ENCODE measurements at regions of chrX and their contacts with region 1.

Region 1: GRCh38 chrX:14029425-14030173 is at the start of gene GEMIN8:
- DNase-seq: peak; percentile 94
- H3K4me3 ChIP-seq: peak within 1 kb of the TSS; percentile 61 to 68 (median 62)
- H3K27ac ChIP-seq: peak within 1 kb of the TSS; percentile 85 to 93 (median 88)
- H3K4me1 ChIP-seq: peaks cover 0 to 20% (median 9%) of the 10 kb centered on the region in 4 donors
- H3K27me3 ChIP-seq: no peaks in the 10 kb centered on the region
- CTCF ChIP-seq: no peak
- EP300 ChIP-seq: peak in 1 of 4 donors; percentile 24
- POLR2A ChIP-seq: peak; percentile 50 to 59
- total RNA-seq, gene GEMIN8: 19.3 to 28.5 (median 23.3) TPM

Region 2: DNA sequence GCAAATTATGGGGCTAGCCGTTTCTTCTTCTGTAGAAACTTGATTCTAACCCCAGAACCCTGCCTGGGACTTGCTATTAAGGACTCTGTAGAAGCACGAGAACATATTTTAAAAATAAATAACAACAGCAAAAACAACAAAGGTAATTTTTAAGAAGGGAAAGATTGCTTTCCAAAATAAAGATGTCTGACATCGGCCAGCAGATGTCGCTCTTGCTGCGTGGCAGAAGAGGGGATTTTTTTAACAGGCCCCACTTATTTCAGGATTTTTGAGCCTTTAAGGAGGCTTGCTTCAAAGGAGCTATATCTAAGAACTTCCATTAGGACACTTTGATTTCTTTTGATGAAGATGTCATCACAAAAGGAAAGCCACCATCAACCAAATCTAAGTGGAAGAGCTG is 523.0 kb before region 1 on chrX:
- intact Hi-C with region 1: loop called (anchors 2 kb)
- DNase-seq: no peak
- H3K4me3 ChIP-seq: no peak overlapping the region
- H3K27ac ChIP-seq: no peak overlapping the region
- H3K4me1 ChIP-seq: peaks cover 0 to 3% (median 0%) of the 10 kb centered on the region in 4 donors
- H3K27me3 ChIP-seq: peaks cover 0 to 4% (median 0%) of the 10 kb centered on the region in 3 donors
- CTCF ChIP-seq: peak; percentile 36 to 57 (median 49)
- EP300 ChIP-seq: no peak
- POLR2A ChIP-seq: no peak

Region 3: DNA sequence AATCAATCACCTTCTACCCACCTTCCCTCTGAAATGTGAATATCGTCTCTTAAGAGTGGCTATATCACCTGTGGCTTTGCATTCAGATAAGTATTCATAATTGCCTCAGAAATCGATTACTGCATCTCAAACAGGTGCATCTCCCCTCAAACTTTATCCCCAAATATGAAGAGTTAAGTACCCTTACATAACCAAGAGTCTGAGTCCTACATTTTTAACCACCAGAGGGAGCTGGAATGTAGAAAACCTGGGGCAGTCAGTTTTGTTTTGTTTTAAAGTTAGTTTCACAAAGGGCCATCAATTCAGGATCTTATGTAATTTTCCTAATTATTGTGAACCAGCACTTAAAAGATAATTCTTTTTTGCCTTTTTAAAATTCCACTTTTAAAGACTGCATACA is 371.0 kb before region 1 on chrX:
- intact Hi-C with region 1: loop called (anchors 2 kb)
- DNase-seq: no peak
- H3K4me3 ChIP-seq: no peak overlapping the region
- H3K27ac ChIP-seq: peak overlapping the region; percentile 19 to 69 (median 61)
- H3K4me1 ChIP-seq: peaks cover 0 to 40% (median 6%) of the 10 kb centered on the region in 4 donors
- H3K27me3 ChIP-seq: no peaks in the 10 kb centered on the region
- CTCF ChIP-seq: peak; percentile 44 to 62 (median 56)
- EP300 ChIP-seq: no peak
- POLR2A ChIP-seq: no peak

Region 4: DNA sequence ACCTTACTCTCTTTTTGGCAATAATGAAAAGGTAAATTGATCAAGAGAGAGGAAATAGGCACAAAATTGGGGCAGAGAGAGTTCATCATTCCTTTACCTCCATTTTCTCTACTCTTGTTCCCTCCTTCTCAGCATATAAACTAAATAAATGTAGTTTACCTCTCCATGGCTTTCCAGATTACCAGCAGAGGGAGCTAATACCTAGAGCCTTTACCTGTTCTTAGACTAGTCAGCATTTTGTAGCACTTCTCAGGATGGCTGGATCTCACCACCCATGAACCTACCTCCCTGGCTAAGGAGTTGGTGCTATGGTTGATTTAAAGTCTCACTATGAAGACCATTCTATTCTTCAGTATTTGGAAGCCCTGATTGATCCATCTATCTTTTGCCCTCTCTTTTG is 279.4 kb before region 1 on chrX:
- intact Hi-C with region 1: loop called (anchors 5 kb)
- DNase-seq: no peak
- H3K4me3 ChIP-seq: no peak overlapping the region
- H3K27ac ChIP-seq: no peak overlapping the region
- H3K4me1 ChIP-seq: no peaks in the 10 kb centered on the region
- H3K27me3 ChIP-seq: no peaks in the 10 kb centered on the region
- CTCF ChIP-seq: peak in 3 of 4 experiments; percentile 14 to 42 (median 22)
- EP300 ChIP-seq: no peak
- POLR2A ChIP-seq: no peak

Region 5: DNA sequence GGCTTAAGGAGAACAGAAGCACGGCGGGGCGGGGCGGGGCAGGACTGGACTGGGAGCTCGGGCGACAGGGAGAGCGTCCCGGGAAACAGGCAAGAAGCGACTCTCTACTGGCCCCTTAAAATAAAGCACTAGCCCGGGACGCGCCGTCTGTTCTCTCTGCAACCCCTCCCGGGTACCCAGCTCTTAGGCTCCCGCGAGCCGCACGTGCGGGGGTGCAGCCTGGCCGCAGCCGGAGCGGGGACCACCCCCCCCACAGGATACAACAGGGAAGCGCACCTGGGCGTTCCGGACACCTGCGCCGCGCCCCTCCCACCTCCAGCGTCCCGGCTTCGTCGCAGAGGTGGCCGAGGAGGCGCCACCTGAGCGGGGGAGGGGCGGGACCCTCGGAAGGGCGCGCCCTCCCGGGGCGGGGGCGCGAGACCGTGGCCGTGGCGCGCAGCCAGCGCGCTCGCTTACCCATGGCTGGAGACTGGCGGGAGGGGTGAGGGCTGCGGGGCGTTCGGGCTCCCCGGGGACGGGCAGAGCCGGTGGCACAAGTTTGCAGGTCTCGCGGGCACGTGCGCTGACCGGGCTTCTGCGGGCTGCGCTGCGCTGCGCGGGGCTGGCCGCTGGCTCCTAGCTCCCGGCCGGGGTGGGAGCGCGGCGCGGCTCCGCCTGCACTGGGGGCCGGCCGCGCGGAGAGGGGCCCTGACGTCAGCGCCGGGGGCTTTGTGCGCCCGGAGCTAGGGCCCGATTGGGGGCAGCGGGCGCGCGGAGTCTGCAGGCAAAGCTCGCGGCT is 91.4 kb before region 1 on chrX:
- intact Hi-C with region 1: loop called (anchors 5 kb)
- DNase-seq: no peak
- H3K4me3 ChIP-seq: peak overlapping the region; percentile 17 to 54 (median 48)
- H3K27ac ChIP-seq: peak overlapping the region in 3 of 4 donors; percentile 8 to 29 (median 10)
- H3K4me1 ChIP-seq: peaks cover 0 to 17% (median 2%) of the 10 kb centered on the region in 4 donors
- H3K27me3 ChIP-seq: peaks cover 10 to 20% (median 13%) of the 10 kb centered on the region in 3 donors
- CTCF ChIP-seq: no peak
- EP300 ChIP-seq: no peak
- POLR2A ChIP-seq: no peak

Region 6: DNA sequence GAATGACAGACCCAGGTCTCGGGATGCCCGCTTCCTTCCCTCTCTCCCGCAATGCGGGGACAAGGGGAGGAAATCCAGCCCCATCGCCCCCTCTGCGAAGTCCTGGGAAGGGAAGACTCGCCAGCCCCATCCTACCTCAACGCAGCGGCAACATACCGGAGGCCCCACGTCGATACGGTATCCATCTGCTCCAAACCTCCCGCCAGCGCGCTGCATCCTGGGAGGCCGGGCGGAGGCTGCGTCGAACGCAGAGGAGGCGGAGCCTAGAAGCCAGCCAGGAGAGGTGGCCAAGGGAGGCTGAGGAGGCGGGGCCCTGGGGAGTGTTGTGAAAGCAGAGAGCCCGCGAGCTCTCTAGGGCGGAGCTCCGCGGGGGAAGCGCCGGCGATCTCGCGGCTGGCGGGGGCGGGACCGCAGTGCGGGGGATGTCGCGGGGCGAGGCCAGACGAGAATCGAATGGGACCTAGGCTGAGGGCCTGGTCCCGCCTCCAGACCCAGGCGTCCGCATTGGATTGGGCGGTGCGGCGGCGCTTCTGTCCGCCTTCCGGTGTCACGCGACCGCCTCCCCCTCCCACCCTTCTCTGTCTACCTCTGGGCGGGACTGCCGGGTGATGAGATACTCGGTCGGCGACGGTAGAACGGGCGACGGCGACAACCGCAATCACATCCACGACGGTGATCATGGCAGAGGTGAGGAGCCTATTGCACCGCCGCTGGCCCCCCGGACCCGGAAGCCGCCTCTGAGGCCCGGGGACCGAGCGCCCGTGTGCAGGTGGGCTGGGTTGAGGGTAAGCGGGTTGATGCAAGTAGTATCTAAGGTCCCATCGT is 843.5 kb after region 1 on chrX and contains the starts of genes FANCB and MOSPD2:
- intact Hi-C with region 1: loop called (anchors 5 kb)
- DNase-seq: peak; percentile 96
- H3K4me3 ChIP-seq: peak within 1 kb of the TSS; percentile 69 to 71 (median 71)
- H3K27ac ChIP-seq: peak within 1 kb of the TSS; percentile 83 to 84 (median 84)
- H3K4me1 ChIP-seq: peaks cover 0 to 8% (median 3%) of the 10 kb centered on the region in 4 donors
- H3K27me3 ChIP-seq: no peaks in the 10 kb centered on the region
- CTCF ChIP-seq: no peak
- EP300 ChIP-seq: no peak
- POLR2A ChIP-seq: no peak
- total RNA-seq, gene FANCB: 1.4 to 4.4 (median 1.8) TPM
- total RNA-seq, gene MOSPD2: 14.3 to 22.1 (median 20.4) TPM

Measured in sigmoid colon (tissue), 7 donors.